ENCODE measurements at regions of chr4 and their contacts with region 1.

Region 1: DNA sequence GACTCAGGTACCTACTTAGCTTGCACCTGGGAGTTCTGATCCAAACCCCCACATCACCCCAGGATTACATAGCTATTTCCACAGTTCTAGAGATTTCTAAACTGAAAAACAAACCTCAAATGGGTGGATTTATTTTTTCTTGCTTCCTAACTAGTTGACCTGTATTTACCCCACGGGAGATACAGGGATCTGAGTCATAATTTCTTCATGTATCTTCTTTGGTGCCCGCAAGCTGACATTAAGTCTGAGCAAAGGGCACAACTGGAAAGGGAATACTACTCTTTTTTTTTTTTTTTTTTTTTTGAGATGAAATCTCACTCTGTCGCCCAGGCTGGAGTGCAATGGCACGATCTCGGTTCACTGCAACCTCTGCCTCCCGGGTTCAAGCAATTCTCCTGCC is 10.0 kb upstream of the ELOVL6 start:
- DNase-seq: no peak
- ATAC-seq: no peak
- H3K4me3 ChIP-seq: no peak overlapping the region
- H3K27ac ChIP-seq: no peak overlapping the region
- H3K4me1 ChIP-seq: no peaks in the 10 kb centered on the region
- H3K27me3 ChIP-seq: no peaks in the 10 kb centered on the region
- CTCF ChIP-seq: no peak
- POLR2A ChIP-seq: no peak

Region 2: DNA sequence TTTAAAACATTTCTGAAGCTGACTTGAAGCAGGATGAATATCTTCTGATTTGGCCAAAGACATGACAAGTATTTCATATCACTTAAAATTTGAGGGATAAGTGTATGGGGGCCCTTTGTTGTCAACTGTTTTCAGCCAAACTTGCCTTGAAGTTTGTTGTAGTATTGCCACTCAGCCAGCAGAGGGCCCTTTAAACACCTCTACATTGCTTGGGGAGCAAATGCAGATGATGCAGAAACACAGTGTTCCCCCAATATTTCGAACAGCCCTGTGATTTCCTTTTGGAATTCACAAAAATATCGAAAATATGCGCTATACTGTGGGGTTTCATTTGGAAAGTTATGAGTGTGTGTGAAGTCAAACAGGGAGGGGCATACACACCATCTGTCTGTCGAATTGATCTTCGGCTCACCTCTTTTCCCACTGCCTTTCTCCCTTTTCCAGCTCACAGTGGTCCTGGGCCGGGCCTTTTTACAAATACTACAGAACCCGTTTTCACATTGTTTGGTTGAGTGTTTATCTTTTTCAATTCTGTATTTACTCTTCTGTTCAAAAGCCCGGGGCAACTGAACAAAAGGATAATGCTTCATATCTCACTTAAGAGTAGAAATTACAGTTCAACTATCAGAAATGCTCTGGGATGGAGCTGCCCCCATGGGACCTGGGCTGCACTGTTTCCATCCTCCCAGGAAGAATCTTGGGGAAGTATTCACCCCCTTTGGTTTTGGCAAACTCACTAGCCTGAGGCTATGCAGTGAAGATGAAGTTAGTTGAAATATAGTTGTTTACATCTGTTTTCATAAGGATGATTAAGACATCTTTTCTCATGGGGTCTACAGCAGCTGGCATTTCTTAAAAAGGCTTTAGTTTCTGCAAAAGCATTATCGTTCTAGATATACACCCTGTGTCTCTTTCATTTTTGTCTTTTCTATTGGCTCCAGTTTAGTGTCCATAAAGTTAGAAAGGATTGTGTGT is 158.2 kb before region 1 on chr4:
- intact Hi-C with region 1: loop called (anchors 2 kb)
- DNase-seq: peak; percentile 44 to 61 (median 47)
- ATAC-seq: no peak
- H3K4me3 ChIP-seq: no peak overlapping the region
- H3K27ac ChIP-seq: no peak overlapping the region
- H3K4me1 ChIP-seq: no peaks in the 10 kb centered on the region
- H3K27me3 ChIP-seq: no peaks in the 10 kb centered on the region
- CTCF ChIP-seq: peak; percentile 51 to 77 (median 67)
- POLR2A ChIP-seq: no peak

Measured in body of pancreas (tissue), 4 donors.